ENCODE measurements at regions of chr1 and their contacts with region 1.

Region 1: GRCh38 chr1:54519709-54520108 is 28.3 kb upstream of the ACOT11 start:
- DNase-seq: peak in 1 of 5 donors; percentile 36
- ATAC-seq: peak in 2 of 4 donors; percentile 52 to 55
- H3K4me3 ChIP-seq: no peak overlapping the region
- H3K27ac ChIP-seq: no peak overlapping the region
- H3K4me1 ChIP-seq: no peaks in the 10 kb centered on the region
- H3K27me3 ChIP-seq: peaks cover 0 to 3% (median 0%) of the 10 kb centered on the region in 9 donors
- CTCF ChIP-seq: peak in 3 of 12 donors; percentile 10 to 36 (median 28)
- POLR2A ChIP-seq: no peak

Region 2: DNA sequence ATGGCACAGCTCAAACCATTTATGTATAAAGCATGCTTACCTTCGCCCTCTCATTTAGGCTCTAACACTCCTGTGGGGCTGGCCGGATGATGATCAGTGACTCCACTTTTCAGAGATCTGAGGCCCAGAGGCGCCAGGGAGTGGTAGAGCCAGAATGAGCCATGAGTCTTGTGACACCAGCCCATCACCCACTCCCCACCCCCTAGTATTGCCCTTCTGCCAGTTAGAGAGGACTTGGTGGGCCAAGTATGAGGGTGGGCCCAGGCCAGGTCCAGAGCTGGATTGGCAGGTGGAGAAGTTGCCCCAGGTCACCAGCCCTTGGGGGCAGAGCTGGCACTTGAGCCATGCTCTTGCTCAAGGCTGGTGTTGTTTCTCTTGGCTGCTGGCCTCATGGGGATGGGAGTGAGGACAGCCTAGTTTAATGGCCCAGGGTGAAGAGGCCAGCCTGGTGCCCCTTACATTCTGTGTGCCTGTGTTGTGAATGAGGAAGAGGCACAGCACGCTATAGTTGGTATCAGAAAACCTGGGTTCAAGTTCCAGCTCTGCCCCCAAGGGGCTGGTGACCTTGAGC is 165.7 kb after region 1 on chr1:
- intact Hi-C with region 1: no loop called
- DNase-seq: no peak
- ATAC-seq: no peak
- H3K4me3 ChIP-seq: no peak overlapping the region
- H3K27ac ChIP-seq: no peak overlapping the region
- H3K4me1 ChIP-seq: no peaks in the 10 kb centered on the region
- H3K27me3 ChIP-seq: no peaks in the 10 kb centered on the region
- CTCF ChIP-seq: no peak
- POLR2A ChIP-seq: no peak

Region 3: GRCh38 chr1:54781023-54781723 is 261.5 kb after region 1 on chr1:
- intact Hi-C with region 1: loop called in 1 of 10 experiments (anchors 10 kb)
- DNase-seq: no peak
- ATAC-seq: peak in 2 of 4 donors; percentile 33 to 35
- H3K4me3 ChIP-seq: no peak overlapping the region
- H3K27ac ChIP-seq: no peak overlapping the region
- H3K4me1 ChIP-seq: peaks cover 0 to 18% (median 0%) of the 10 kb centered on the region in 12 donors
- H3K27me3 ChIP-seq: peaks cover 0 to 41% (median 7%) of the 10 kb centered on the region in 9 donors
- CTCF ChIP-seq: no peak
- POLR2A ChIP-seq: no peak